ENCODE measurements at regions of chr3 and their contacts with region 1.

Region 1: GRCh38 chr3:23202921-23203707 is at the start of gene UBE2E2:
- DNase-seq: no peak
- H3K4me3 ChIP-seq: peak within 1 kb of the TSS; percentile 83 to 99 (median 96)
- H3K27ac ChIP-seq: peak within 1 kb of the TSS; percentile 82 to 93 (median 88)
- H3K4me1 ChIP-seq: peaks cover 17 to 33% (median 27%) of the 10 kb centered on the region in 4 donors
- H3K27me3 ChIP-seq: no peaks in the 10 kb centered on the region
- CTCF ChIP-seq: no peak
- EP300 ChIP-seq: no peak
- POLR2A ChIP-seq: peak; percentile 19
- total RNA-seq, gene UBE2E2: 53.5 to 143 (median 90.3) TPM

Region 2: GRCh38 chr3:23055733-23056376 is 147.3 kb before region 1 on chr3:
- intact Hi-C with region 1: no loop called
- DNase-seq: no peak
- H3K4me3 ChIP-seq: no peak overlapping the region
- H3K27ac ChIP-seq: no peak overlapping the region
- H3K4me1 ChIP-seq: peaks cover 0 to 18% (median 15%) of the 10 kb centered on the region in 4 donors
- H3K27me3 ChIP-seq: no peaks in the 10 kb centered on the region
- CTCF ChIP-seq: no peak
- EP300 ChIP-seq: no peak
- POLR2A ChIP-seq: no peak

Region 3: GRCh38 chr3:23264413-23264812 is 61.3 kb after region 1 on chr3:
- intact Hi-C with region 1: no loop called
- DNase-seq: no peak
- H3K4me3 ChIP-seq: no peak overlapping the region
- H3K27ac ChIP-seq: no peak overlapping the region
- H3K4me1 ChIP-seq: peaks cover 0 to 8% (median under 1%) of the 10 kb centered on the region in 4 donors
- H3K27me3 ChIP-seq: no peaks in the 10 kb centered on the region
- CTCF ChIP-seq: no peak
- EP300 ChIP-seq: no peak
- POLR2A ChIP-seq: no peak

Region 4: GRCh38 chr3:23455084-23455483 is 252.0 kb after region 1 on chr3:
- intact Hi-C with region 1: loop called (anchors 10 kb)
- DNase-seq: no peak
- H3K4me3 ChIP-seq: no peak overlapping the region
- H3K27ac ChIP-seq: no peak overlapping the region
- H3K4me1 ChIP-seq: peaks cover 12 to 37% (median 33%) of the 10 kb centered on the region in 4 donors
- H3K27me3 ChIP-seq: no peaks in the 10 kb centered on the region
- CTCF ChIP-seq: no peak
- EP300 ChIP-seq: no peak
- POLR2A ChIP-seq: peak; percentile 28